Common myeloid progenitor, CD34-positive (primary cell): ENCODE measurements at regions of chr4 and their contacts with region 1.

Region 1: GRCh38 chr4:108018040-108018883 is 28.6 kb downstream of the HADH start:
- DNase-seq: peak; percentile 74 to 87 (median 79)
- H3K4me3 ChIP-seq: no peak overlapping the region
- H3K27ac ChIP-seq: no peak overlapping the region
- H3K4me1 ChIP-seq: no peaks in the 10 kb centered on the region
- H3K27me3 ChIP-seq: no peaks in the 10 kb centered on the region

Region 2: GRCh38 chr4:107956011-107956410 is 62.3 kb before region 1 on chr4:
- CTCF ChIA-PET with region 1: no interaction called
- POLR2A ChIA-PET with region 1: no interaction called
- DNase-seq: no peak
- H3K4me3 ChIP-seq: no peak overlapping the region
- H3K27ac ChIP-seq: no peak overlapping the region
- H3K4me1 ChIP-seq: no peaks in the 10 kb centered on the region
- H3K27me3 ChIP-seq: no peaks in the 10 kb centered on the region

Region 3: GRCh38 chr4:107993969-107994368 is 24.3 kb before region 1 on chr4:
- CTCF ChIA-PET with region 1: interaction called, 11 read pairs
- POLR2A ChIA-PET with region 1: no interaction called
- DNase-seq: peak in 2 of 3 donors; percentile 10 to 22
- H3K4me3 ChIP-seq: no peak overlapping the region
- H3K27ac ChIP-seq: no peak overlapping the region
- H3K4me1 ChIP-seq: peaks cover 11 to 58% (median 39%) of the 10 kb centered on the region in 4 experiments
- H3K27me3 ChIP-seq: no peaks in the 10 kb centered on the region

Region 4: DNA sequence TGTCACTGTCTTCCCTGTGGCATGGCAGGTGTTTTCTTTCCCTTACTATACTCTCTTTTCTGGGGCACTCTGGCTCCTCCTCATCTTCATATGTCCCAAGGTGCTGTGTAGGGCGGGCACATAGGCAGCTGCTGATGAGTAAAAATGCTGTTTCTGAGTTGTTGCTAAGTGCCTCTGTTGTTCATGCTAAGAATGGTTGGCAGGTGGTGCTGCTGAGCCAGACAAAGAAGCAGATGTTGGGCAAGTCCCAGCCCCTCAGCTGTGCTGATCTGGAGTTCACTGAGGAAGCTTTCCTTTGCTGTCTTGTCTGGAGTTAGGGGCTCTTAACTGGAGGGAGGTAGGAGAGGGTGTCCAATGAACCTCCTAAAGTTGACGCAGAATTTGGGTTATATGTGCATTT is 12.1 kb after region 1 on chr4:
- CTCF ChIA-PET with region 1: interaction called, 22 read pairs
- POLR2A ChIA-PET with region 1: no interaction called
- DNase-seq: peak; percentile 39 to 71 (median 68)
- H3K4me3 ChIP-seq: no peak overlapping the region
- H3K27ac ChIP-seq: no peak overlapping the region
- H3K4me1 ChIP-seq: peaks cover 0 to 11% (median 7%) of the 10 kb centered on the region in 4 experiments
- H3K27me3 ChIP-seq: no peaks in the 10 kb centered on the region